CD4-positive, alpha-beta memory T cell (primary cell): ENCODE measurements at regions of chr18 and their contacts with region 1.

Region 1: GRCh38 chr18:3771121-3771971 is 321.4 kb downstream of the TGIF1 start:
- DNase-seq: peak; percentile 48 to 65 (median 59)
- H3K4me3 ChIP-seq: no peak overlapping the region
- H3K4me3 Mint-ChIP-seq: peak overlapping the region in 7 of 8 donors; percentile 19 to 79 (median 58)
- H3K27ac ChIP-seq: no peak overlapping the region
- H3K27ac Mint-ChIP-seq: no peak overlapping the region
- H3K4me1 ChIP-seq: peaks cover 5% of the 10 kb centered on the region
- H3K4me1 Mint-ChIP-seq: peaks cover 5 to 17% (median 11%) of the 10 kb centered on the region in 4 donors
- H3K27me3 ChIP-seq: no peaks in the 10 kb centered on the region
- H3K27me3 Mint-ChIP-seq: peaks cover 18 to 28% of the 10 kb centered on the region in 2 donors

Region 2: GRCh38 chr18:1983746-1984515 is 1787.4 kb before region 1 on chr18:
- CTCF ChIA-PET with region 1: no interaction called
- POLR2A ChIA-PET with region 1: no interaction called
- intact Hi-C with region 1: no loop called
- DNase-seq: no peak
- H3K4me3 ChIP-seq: no peak overlapping the region
- H3K4me3 Mint-ChIP-seq: no peak overlapping the region
- H3K27ac ChIP-seq: no peak overlapping the region
- H3K27ac Mint-ChIP-seq: no peak overlapping the region
- H3K4me1 ChIP-seq: no peaks in the 10 kb centered on the region
- H3K4me1 Mint-ChIP-seq: no peaks in the 10 kb centered on the region
- H3K27me3 ChIP-seq: no peaks in the 10 kb centered on the region
- H3K27me3 Mint-ChIP-seq: no peaks in the 10 kb centered on the region

Region 3: GRCh38 chr18:2627821-2628276 is 1143.5 kb before region 1 on chr18:
- CTCF ChIA-PET with region 1: no interaction called
- POLR2A ChIA-PET with region 1: no interaction called
- intact Hi-C with region 1: no loop called
- DNase-seq: no peak
- H3K4me3 ChIP-seq: no peak overlapping the region
- H3K4me3 Mint-ChIP-seq: peak overlapping the region in 1 of 8 donors; percentile 14
- H3K27ac ChIP-seq: no peak overlapping the region
- H3K27ac Mint-ChIP-seq: peak overlapping the region in 1 of 7 donors; percentile 30
- H3K4me1 ChIP-seq: peaks cover 10% of the 10 kb centered on the region
- H3K4me1 Mint-ChIP-seq: peaks cover 14 to 29% (median 25%) of the 10 kb centered on the region in 4 donors
- H3K27me3 ChIP-seq: no peaks in the 10 kb centered on the region
- H3K27me3 Mint-ChIP-seq: no peaks in the 10 kb centered on the region

Region 4: DNA sequence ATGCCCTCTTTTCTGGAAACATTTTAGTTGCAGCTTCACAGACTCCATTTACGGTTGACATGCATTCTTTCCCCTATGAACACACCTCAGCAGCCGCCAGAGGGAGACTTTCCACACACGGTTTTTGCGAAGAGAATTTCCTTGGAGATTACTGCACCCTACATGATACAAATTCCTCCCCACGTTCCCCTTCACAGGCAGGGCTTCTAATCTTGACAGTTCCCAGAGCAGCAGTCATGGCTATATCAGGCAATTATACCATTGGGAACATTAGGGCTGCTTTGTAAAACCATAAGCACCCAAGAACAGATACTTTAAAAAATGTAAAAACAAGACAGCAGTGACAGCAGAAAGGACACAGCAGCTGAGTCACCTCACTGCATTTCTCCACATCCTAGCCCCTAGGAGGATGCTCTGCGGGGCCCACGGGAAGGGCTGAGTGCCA is 67.6 kb before region 1 on chr18:
- CTCF ChIA-PET with region 1: no interaction called
- POLR2A ChIA-PET with region 1: no interaction called
- intact Hi-C with region 1: no loop called
- DNase-seq: peak in 1 of 5 donors; percentile 15
- H3K4me3 ChIP-seq: no peak overlapping the region
- H3K4me3 Mint-ChIP-seq: no peak overlapping the region
- H3K27ac ChIP-seq: no peak overlapping the region
- H3K27ac Mint-ChIP-seq: no peak overlapping the region
- H3K4me1 ChIP-seq: no peaks in the 10 kb centered on the region
- H3K4me1 Mint-ChIP-seq: peaks cover 0 to 3% (median 1%) of the 10 kb centered on the region in 4 donors
- H3K27me3 ChIP-seq: peaks cover 9% of the 10 kb centered on the region
- H3K27me3 Mint-ChIP-seq: peaks cover 28 to 47% of the 10 kb centered on the region in 2 donors

Region 5: GRCh38 chr18:3782901-3783300 is 11.6 kb after region 1 on chr18:
- CTCF ChIA-PET with region 1: interaction called, 22 read pairs
- POLR2A ChIA-PET with region 1: no interaction called
- intact Hi-C with region 1: no loop called
- DNase-seq: no peak
- H3K4me3 ChIP-seq: no peak overlapping the region
- H3K4me3 Mint-ChIP-seq: no peak overlapping the region
- H3K27ac ChIP-seq: no peak overlapping the region
- H3K27ac Mint-ChIP-seq: no peak overlapping the region
- H3K4me1 ChIP-seq: no peaks in the 10 kb centered on the region
- H3K4me1 Mint-ChIP-seq: no peaks in the 10 kb centered on the region
- H3K27me3 ChIP-seq: no peaks in the 10 kb centered on the region
- H3K27me3 Mint-ChIP-seq: peaks cover 6 to 16% of the 10 kb centered on the region in 2 donors

Region 6: DNA sequence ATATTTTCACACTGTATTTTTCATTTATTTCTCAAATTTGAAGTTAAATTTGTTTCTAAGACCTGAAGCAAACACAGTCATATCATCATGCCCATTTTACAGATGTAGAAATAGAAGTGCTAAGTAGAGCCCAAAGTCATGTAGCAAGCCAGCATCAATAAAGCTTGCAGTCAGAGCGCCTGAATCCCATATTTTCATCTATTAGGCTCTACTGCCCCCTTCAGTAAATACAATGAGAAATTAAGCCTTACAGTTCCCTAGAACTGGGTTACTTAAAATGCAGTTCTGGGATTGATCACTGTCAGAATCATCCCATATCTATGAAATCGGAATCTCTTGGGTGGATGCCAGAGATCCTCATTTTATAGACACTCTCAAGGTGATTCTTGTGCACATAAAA is 98.5 kb after region 1 on chr18:
- CTCF ChIA-PET with region 1: interaction called, 8 read pairs
- POLR2A ChIA-PET with region 1: no interaction called
- intact Hi-C with region 1: loop called (anchors 1 kb)
- DNase-seq: peak in 1 of 5 donors; percentile 1
- H3K4me3 ChIP-seq: no peak overlapping the region
- H3K4me3 Mint-ChIP-seq: no peak overlapping the region
- H3K27ac ChIP-seq: no peak overlapping the region
- H3K27ac Mint-ChIP-seq: no peak overlapping the region
- H3K4me1 ChIP-seq: no peaks in the 10 kb centered on the region
- H3K4me1 Mint-ChIP-seq: peaks cover 0 to 2% (median 0%) of the 10 kb centered on the region in 4 donors
- H3K27me3 ChIP-seq: no peaks in the 10 kb centered on the region
- H3K27me3 Mint-ChIP-seq: peaks cover 12 to 16% of the 10 kb centered on the region in 2 donors

Region 7: DNA sequence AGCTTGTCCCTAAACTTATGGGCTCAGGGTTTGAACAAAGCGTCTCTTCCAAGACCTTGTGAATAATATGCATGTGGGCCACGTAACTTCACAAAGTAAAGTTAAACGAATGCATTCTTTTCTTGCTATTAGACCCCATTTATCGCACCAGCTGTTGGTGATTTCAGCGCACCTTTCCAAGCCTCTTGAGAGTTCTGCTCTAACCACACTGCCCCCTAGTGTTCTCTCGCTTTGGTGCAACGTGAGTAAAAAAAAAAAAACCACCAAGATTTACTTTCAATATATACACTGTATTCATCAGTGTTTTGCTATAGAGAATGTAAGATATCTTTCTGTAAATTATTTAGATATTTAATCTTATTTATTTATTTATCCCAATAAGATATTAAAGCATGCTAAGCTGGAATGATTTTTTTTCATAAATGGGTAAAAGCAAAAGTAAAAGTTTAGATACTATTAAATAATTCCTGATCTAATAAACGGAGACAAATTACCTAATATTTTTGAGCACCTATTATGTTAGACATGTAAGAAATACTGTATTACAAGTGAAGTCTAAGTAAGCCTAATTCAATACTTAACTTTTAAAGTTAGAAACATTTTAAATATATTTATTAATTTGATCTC is 224.2 kb after region 1 on chr18:
- CTCF ChIA-PET with region 1: interaction called, 25 read pairs
- POLR2A ChIA-PET with region 1: no interaction called
- intact Hi-C with region 1: loop called (anchors 1 kb)
- DNase-seq: peak in 4 of 5 donors; percentile 43 to 49 (median 46)
- H3K4me3 ChIP-seq: no peak overlapping the region
- H3K4me3 Mint-ChIP-seq: no peak overlapping the region
- H3K27ac ChIP-seq: no peak overlapping the region
- H3K27ac Mint-ChIP-seq: no peak overlapping the region
- H3K4me1 ChIP-seq: no peaks in the 10 kb centered on the region
- H3K4me1 Mint-ChIP-seq: peaks cover 0 to 3% (median 0%) of the 10 kb centered on the region in 4 donors
- H3K27me3 ChIP-seq: no peaks in the 10 kb centered on the region
- H3K27me3 Mint-ChIP-seq: peaks cover 0 to 2% of the 10 kb centered on the region in 2 donors

Region 8: GRCh38 chr18:5057386-5058348 is 1286.3 kb after region 1 on chr18:
- CTCF ChIA-PET with region 1: interaction called, 10 read pairs
- POLR2A ChIA-PET with region 1: no interaction called
- intact Hi-C with region 1: no loop called
- DNase-seq: peak; percentile 15 to 47 (median 32)
- H3K4me3 ChIP-seq: no peak overlapping the region
- H3K4me3 Mint-ChIP-seq: peak overlapping the region in 1 of 8 donors; percentile 39
- H3K27ac ChIP-seq: no peak overlapping the region
- H3K27ac Mint-ChIP-seq: peak overlapping the region in 4 of 7 donors; percentile 9 to 77 (median 30)
- H3K4me1 ChIP-seq: peaks cover 11% of the 10 kb centered on the region
- H3K4me1 Mint-ChIP-seq: peaks cover 15 to 21% (median 18%) of the 10 kb centered on the region in 4 donors
- H3K27me3 ChIP-seq: no peaks in the 10 kb centered on the region
- H3K27me3 Mint-ChIP-seq: peaks cover 0 to 8% of the 10 kb centered on the region in 2 donors